ENCODE measurements at regions of chr22 and their contacts with region 1.

Region 1: DNA sequence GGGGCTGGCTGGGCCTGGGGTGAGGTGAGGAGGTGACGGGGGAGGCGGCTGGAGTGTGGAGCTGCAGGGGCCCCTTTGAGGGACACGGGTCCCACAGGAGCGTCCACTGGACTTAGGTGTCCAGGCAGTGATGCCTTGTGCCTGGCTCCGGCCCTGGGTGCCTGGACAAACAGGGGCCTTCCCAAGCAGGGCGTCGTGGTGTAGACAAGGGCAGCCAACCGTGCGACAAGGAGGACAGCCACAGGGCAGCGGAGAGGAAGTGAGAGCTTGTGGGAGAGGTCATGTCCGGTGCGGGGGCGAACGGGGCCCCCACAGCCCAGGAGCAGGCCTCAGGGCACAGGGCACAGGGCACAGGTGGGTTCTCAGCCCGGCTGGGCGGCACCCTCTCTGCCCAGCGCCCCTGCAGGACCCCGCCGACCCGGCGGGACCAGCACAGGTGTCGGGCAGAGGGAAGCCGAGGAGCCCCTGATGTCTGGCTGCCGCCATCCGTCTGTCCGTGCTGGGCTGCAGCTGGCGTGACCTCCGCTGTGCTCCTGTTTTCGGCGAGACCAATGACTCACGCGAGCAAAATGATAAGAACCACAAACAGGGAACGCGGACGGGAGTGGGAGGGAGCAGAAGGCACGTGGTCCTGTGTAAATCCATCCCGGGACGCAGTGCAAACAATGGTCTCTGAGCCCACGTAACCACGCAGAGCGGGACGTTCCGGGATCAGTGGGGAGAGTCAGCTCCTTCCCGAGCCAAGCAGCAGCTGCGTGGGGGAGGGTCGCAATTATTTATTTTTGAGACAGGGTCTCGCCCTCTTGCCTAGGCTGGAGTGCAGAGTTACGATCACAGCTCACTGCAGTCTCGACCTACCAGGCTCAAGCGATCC is 49.1 kb upstream of the A4GALT start:
- DNase-seq: no peak
- H3K4me3 ChIP-seq: no peak overlapping the region
- H3K27ac ChIP-seq: no peak overlapping the region
- H3K4me1 ChIP-seq: peaks cover 10% of the 10 kb centered on the region
- H3K27me3 ChIP-seq: no peaks in the 10 kb centered on the region
- CTCF ChIP-seq: no peak

Region 2: DNA sequence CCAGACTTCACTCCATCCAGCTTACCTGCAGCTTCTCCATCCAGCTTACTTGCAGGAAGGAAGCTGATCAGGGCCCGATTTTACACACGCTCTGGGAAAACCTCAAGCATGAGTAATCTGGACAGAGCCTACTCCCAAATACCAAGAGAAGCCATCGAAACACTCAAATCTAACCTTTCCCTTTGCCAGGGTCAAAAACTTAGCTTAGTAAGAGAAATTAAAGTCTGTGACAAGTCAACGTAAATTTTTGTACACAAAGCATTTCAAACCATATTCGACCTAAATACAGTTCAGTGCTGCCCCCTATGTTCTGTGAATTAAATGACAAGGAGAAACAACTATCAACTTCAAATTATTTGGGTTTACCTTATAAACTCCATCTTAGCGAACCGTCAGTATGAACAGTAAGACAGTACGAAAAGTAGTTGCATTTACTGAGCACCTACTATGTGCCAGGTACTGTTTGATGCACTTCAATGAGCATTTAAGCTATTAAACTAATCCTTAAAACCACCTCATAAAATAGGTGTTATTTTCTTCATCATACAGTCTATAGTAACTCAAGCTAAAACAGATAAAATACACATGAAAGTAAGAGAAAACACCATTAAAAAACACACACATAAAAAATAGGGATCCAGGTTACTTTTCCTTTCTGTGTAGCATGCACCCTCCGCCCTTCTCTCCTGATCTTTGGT is 50.4 kb after region 1 on chr22:
- CTCF ChIA-PET with region 1: no interaction called
- dilution Hi-C with region 1: no loop called
- in situ Hi-C with region 1: no loop called
- intact Hi-C with region 1: no loop called
- DNase-seq: peak; percentile 82
- H3K4me3 ChIP-seq: no peak overlapping the region
- H3K27ac ChIP-seq: no peak overlapping the region
- H3K4me1 ChIP-seq: peaks cover 10% of the 10 kb centered on the region
- H3K27me3 ChIP-seq: no peaks in the 10 kb centered on the region
- CTCF ChIP-seq: peak; percentile 61 to 76

Region 3: GRCh38 chr22:43129426-43130425 is 359.9 kb after region 1 on chr22:
- CTCF ChIA-PET with region 1: no interaction called
- dilution Hi-C with region 1: loop called (anchors 5 kb)
- in situ Hi-C with region 1: no loop called
- intact Hi-C with region 1: no loop called
- DNase-seq: no peak
- H3K4me3 ChIP-seq: no peak overlapping the region
- H3K27ac ChIP-seq: no peak overlapping the region
- H3K4me1 ChIP-seq: peaks cover 24% of the 10 kb centered on the region
- H3K27me3 ChIP-seq: no peaks in the 10 kb centered on the region
- CTCF ChIP-seq: no peak